Ascending aorta (tissue), 2 donors: ENCODE measurements at regions of chr12 and their contacts with region 1.

Region 1: DNA sequence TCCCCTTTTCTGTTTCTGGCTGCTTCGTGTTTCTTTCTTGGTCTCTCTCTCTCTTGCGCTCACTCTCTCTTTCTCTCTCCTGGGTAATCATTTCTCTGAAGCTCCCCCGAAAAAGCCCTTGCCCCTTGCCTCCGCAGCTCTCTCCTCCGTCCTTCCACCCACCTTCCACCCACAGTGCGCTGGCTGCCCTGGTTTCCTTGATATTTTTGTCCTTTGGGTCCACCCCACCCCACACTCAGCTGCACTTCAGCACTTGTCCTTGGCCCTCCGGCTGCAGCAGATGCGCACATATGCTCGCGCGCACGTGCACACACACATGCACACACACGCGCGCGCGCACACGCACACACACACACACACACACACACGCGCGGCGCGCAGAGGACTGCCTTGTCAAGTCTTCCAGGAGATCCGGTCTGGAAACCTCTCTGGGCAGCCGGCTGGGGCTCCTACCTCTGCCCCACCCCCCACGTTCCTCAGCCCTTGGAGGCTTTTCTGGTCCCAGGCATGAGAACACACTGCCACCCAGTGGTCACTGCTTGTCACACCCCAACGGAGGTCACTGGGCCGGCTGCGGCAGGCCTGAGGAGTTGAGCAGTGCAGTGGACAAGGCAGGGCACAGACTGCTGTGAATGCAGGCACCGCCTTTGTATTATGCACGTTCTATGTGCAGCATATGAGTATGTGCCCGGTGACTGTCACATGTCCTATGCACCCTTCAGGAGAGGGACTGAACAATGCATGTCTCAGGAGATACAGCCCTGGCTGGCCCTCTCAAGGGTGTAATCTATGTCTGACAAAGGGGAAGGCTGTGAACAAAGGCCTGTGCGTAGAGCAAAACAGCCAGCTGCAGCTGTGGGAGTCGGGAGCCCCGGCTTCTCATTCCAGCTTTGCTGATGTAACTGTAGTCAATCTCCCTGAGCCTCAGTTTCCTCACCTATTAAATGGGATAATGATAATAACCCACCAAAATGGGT is 6.5 kb downstream of the LAG3 start:
- DNase-seq: peak; percentile 82 to 97
- H3K4me3 ChIP-seq: peak overlapping the region; percentile 45 to 72
- H3K27ac ChIP-seq: peak overlapping the region; percentile 35 to 77
- H3K4me1 ChIP-seq: peaks cover 7% of the 10 kb centered on the region in 2 donors
- H3K27me3 ChIP-seq: no peaks in the 10 kb centered on the region
- CTCF ChIP-seq: peak; percentile 93 to 97 (median 95)

Region 2: GRCh38 chr12:6613776-6614512 is 164.9 kb before region 1 on chr12:
- intact Hi-C with region 1: loop called (anchors 2 kb)
- DNase-seq: peak; percentile 85 to 96
- H3K4me3 ChIP-seq: peak overlapping the region in 1 of 2 donors; percentile 35
- H3K27ac ChIP-seq: peak overlapping the region; percentile 94 to 97
- H3K4me1 ChIP-seq: peaks cover 17 to 22% of the 10 kb centered on the region in 2 donors
- H3K27me3 ChIP-seq: no peaks in the 10 kb centered on the region
- CTCF ChIP-seq: peak in 1 of 3 experiments; percentile 3

Region 3: DNA sequence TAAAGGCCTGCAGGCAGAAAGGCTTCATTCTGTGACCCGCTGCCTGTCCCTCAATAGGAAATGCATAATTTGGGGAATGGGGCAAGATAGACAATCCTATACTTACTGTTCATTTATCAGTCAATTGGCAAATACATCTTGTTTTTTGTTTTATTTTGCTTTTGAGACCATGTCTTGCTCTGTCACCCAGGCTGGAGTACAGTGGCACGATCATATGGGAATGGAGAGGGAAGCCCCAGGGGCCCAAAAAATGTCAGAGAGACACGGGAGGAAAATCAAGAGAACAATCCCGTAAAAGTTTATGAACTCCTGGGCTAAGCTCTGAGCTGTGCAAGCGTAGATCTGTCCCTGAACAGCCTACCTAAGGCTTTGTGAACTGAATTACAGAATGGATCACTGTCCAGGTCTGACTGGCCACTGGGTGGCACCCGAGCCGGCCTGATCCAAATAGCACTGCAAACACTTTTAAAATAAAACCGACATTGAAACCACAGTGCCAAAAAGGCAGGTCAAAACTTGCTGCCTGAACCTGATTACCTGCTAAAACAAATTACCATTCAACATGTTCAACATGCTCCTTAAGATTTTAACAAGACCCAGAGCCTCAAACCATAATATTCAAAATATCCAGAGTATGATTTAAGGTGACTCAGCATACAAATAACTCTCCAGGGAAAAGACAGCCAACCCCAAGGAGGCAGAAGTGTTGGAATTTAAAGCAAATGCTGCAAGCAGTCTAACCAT is 43.2 kb before region 1 on chr12:
- intact Hi-C with region 1: loop called (anchors 1 kb)
- DNase-seq: peak in 1 of 2 donors; percentile 75
- H3K4me3 ChIP-seq: no peak overlapping the region
- H3K27ac ChIP-seq: no peak overlapping the region
- H3K4me1 ChIP-seq: no peaks in the 10 kb centered on the region
- H3K27me3 ChIP-seq: no peaks in the 10 kb centered on the region
- CTCF ChIP-seq: peak; percentile 56 to 61 (median 57)

Region 4: DNA sequence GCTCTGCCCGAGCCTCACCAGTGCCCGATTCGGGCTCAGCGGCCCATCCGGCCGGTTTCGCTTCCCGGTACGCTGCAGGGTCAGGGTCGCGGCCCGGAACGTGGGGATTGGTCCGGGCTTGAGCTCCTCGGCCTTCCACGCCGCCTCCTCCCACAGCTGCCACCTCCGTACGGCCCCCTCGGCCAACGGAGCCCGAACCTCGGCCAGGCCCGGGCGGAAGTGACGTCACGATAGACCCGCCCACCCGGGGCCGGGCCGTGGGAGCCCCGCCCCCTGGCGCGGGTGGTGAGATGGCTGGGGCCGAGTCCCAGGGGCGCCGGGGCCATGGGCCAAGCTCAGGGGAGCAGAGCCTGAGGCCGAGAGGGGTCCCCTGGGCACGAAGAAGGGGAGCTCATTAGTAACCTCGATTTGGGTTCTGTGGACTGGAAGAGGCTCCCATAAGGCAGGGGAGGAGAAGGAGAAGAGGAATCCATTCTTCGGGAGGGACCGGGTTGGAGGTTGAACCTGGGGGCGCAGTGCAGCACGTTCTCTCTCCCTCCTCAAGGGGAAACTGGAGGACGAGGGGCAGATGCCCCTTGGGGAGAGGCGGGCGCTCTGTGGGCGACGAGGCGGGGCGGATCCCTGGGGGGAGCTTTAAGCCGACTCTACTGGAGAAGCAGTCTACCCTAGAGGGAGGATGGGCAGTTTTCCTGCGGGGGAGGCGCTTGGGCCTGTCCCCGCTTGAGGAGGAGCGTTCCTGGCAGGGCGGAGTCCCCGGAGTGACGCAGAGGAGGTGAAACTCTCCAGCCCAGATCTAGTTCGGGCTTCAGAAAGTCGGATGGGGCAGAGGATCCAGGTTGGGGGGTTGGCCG is 25.7 kb before region 1 on chr12 and contains the start of gene MLF2:
- intact Hi-C with region 1: loop called (anchors 1 kb)
- DNase-seq: peak; percentile 93 to 99
- H3K4me3 ChIP-seq: peak within 1 kb of the TSS; percentile 59 to 96
- H3K27ac ChIP-seq: peak within 1 kb of the TSS; percentile 95 to 98
- H3K4me1 ChIP-seq: peaks cover 7 to 9% of the 10 kb centered on the region in 2 donors
- H3K27me3 ChIP-seq: no peaks in the 10 kb centered on the region
- CTCF ChIP-seq: peak in 1 of 3 experiments; percentile 91
- total RNA-seq, gene MLF2: 145 TPM

Region 5: GRCh38 chr12:6764011-6764828 is 14.6 kb before region 1 on chr12:
- intact Hi-C with region 1: loop called (anchors 1 kb)
- DNase-seq: peak; percentile 85 to 96
- H3K4me3 ChIP-seq: peak overlapping the region; percentile 96 to 97
- H3K27ac ChIP-seq: peak overlapping the region; percentile 84 to 97
- H3K4me1 ChIP-seq: peaks cover 10 to 29% of the 10 kb centered on the region in 2 donors
- H3K27me3 ChIP-seq: no peaks in the 10 kb centered on the region
- CTCF ChIP-seq: no peak

Region 6: DNA sequence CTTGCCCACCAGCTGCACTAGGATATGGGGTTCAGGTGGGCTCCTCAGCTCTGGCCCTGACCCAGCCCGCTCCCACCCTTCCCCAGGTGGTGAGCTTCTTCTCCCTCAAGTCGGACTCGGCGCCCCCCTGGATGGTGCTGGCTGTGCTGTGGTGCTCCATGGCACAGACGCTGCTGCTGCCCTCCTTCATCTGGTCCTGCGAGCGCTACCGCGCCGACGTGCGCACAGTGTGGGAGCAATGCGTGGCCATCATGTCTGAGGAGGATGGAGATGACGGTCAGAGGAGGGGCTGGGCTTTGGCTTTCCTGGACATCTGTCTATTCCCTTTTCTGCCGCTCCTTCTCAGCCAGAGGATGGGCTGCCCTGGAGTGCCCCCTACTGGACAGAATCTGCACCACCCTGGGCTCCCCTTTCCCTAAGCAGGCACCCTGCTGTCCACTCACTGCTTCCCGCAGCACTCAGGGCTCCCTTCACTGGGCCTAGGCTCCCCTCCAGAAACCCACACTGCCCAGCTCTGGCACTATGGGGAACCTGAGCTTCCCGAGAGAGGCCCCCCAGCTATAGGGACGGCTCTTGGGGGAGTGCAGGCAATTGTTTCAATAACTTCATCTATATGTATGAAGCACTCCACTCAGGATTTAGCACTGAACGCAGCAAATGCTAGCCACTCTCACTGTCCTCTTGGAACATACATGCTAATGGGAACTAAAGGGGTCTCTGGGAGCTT is 46.7 kb after region 1 on chr12:
- intact Hi-C with region 1: loop called (anchors 2 kb)
- DNase-seq: peak; percentile 53 to 93
- H3K4me3 ChIP-seq: peak overlapping the region in 1 of 2 donors; percentile 46
- H3K27ac ChIP-seq: no peak overlapping the region
- H3K4me1 ChIP-seq: peaks cover 3 to 23% of the 10 kb centered on the region in 2 donors
- H3K27me3 ChIP-seq: peaks cover 7% of the 10 kb centered on the region
- CTCF ChIP-seq: peak; percentile 90 to 93 (median 91)

Region 7: GRCh38 chr12:6914246-6914946 is 135.5 kb after region 1 on chr12 and contains the start of gene ENO2:
- intact Hi-C with region 1: no loop called
- DNase-seq: peak; percentile 51 to 92
- H3K4me3 ChIP-seq: peak within 1 kb of the TSS; percentile 81 to 89
- H3K27ac ChIP-seq: peak within 1 kb of the TSS; percentile 90 to 94
- H3K4me1 ChIP-seq: peaks cover 4 to 11% of the 10 kb centered on the region in 2 donors
- H3K27me3 ChIP-seq: no peaks in the 10 kb centered on the region
- CTCF ChIP-seq: no peak
- total RNA-seq, gene ENO2: 30.3 TPM